ENCODE measurements at regions of chr15 and their contacts with region 1.

Region 1: GRCh38 chr15:98292442-98293240 is 332.1 kb downstream of the ARRDC4 start:
- DNase-seq: no peak
- ATAC-seq: peak; percentile 85
- H3K4me3 ChIP-seq: no peak overlapping the region
- H3K27ac ChIP-seq: no peak overlapping the region
- H3K4me1 ChIP-seq: no peaks in the 10 kb centered on the region; the same call in 1 of the 2 replicates
- H3K27me3 ChIP-seq: peaks cover 18% of the 10 kb centered on the region
- CTCF ChIP-seq: peak; percentile 93

Region 2: DNA sequence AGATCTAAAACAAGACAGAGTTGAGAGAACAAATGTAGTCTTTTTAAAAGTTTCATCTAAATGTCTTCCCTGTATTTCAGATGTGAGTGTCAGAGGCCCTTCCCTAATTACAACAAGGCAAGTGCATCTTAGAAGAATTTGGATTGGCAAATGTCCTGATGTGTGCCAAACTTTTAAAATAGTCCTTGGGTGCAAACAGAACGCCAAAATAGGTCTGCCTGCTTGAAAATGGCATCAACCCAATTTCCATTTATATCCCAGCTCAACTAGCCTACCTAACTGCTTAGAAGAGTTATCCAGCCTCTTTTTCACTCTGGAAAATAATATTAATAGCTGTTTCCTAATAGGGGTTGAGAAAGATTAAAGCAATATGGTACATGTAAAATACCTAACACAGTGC is 643.9 kb before region 1 on chr15:
- CTCF ChIA-PET with region 1: no interaction called
- POLR2A ChIA-PET with region 1: no interaction called
- in situ Hi-C with region 1: no loop called
- intact Hi-C with region 1: no loop called
- DNase-seq: no peak
- ATAC-seq: no peak
- H3K4me3 ChIP-seq: no peak overlapping the region
- H3K27ac ChIP-seq: no peak overlapping the region
- H3K4me1 ChIP-seq: no peaks in the 10 kb centered on the region
- H3K27me3 ChIP-seq: no peaks in the 10 kb centered on the region
- CTCF ChIP-seq: no peak

Region 3: DNA sequence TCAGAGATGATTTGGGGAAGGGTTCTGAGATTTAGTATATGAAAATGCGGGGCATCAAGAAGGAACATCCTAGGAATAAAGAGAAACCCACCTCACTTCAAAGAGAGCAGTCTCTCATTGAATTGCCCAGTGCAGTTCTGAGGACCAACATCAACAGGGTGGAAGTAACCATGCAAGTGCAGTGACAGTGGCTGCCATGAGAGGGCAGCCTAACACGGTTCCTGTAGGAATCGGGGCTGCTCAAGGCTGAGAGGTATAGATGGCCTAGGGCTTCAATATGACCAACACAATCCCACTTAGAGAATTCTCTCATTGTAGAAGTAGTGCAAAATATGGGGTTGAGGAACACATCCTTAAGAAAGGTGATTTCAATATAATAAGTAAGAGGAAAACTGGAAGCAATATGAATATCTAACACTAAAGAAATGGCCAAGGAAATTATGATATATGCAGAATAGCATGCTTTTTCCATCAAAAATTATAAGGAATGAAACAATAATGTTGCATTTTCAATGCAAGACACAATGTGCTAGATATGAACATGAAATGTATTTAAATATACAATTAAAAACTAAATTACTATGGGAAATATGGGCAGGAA is 383.2 kb before region 1 on chr15:
- CTCF ChIA-PET with region 1: no interaction called
- POLR2A ChIA-PET with region 1: no interaction called
- in situ Hi-C with region 1: no loop called
- intact Hi-C with region 1: loop called (anchors 2 kb)
- DNase-seq: peak; percentile 39
- ATAC-seq: peak; percentile 99
- H3K4me3 ChIP-seq: no peak overlapping the region
- H3K27ac ChIP-seq: no peak overlapping the region
- H3K4me1 ChIP-seq: no peaks in the 10 kb centered on the region
- H3K27me3 ChIP-seq: peaks cover 13% of the 10 kb centered on the region
- CTCF ChIP-seq: peak; percentile 94

Region 4: DNA sequence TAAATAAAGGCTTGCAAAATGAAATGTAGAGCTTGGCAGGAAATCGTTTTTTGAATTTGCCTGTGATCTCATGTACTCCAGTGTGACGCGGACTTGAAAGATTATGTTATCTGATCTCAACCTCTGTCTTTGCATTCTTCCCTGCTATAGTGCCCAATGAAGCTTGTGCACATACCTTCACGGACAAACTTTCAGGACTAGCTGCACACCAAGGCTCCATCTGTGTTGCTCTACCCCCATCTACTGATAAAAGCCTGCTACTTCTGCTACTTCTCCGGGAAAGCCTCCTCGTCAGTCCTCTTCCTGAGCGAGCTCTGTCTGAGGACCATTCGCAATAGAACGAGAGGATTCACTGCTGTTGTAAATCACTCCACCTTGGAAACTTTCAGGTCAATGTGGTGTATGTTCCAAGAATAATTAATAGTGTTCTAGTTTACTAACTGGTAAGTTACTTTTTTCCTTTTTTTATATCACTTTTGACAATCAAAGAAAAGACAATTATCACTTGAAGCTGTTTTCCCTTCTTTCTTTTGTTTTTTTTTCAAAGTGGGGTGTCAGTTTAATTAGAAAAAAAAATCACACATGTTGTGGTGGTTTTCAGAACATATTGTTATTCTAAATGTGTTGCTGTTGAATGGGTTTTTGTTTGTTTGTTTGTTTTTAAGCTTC is 114.6 kb before region 1 on chr15:
- CTCF ChIA-PET with region 1: interaction called, 3 read pairs
- POLR2A ChIA-PET with region 1: no interaction called
- in situ Hi-C with region 1: no loop called
- intact Hi-C with region 1: loop called (anchors 5 kb)
- DNase-seq: peak; percentile 39
- ATAC-seq: peak; percentile 98
- H3K4me3 ChIP-seq: no peak overlapping the region
- H3K27ac ChIP-seq: no peak overlapping the region
- H3K4me1 ChIP-seq: no peaks in the 10 kb centered on the region
- H3K27me3 ChIP-seq: peaks cover 11% of the 10 kb centered on the region
- CTCF ChIP-seq: peak; percentile 80

Region 5: DNA sequence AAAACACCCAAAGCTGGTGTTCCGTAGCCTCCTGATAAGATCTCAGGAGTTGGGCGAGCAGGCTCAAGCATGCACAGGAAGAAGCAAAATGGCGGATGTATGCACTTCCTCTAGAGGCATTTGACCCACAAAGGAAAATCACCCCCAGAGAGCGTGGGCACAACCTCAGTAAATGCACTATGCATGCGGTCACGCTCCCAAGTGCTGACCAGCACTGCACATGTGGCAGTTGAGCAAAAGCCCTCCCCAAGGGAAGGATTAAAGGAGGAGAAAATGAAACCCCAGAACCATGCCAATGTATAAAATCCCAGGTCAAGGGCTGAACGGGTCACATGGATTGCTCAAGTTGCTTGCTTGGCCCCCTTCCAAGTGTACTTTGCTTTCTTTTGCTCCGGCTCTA is 66.3 kb after region 1 on chr15:
- CTCF ChIA-PET with region 1: no interaction called
- POLR2A ChIA-PET with region 1: no interaction called
- in situ Hi-C with region 1: no loop called
- intact Hi-C with region 1: loop called (anchors 10 kb)
- DNase-seq: no peak
- ATAC-seq: no peak
- H3K4me3 ChIP-seq: no peak overlapping the region
- H3K27ac ChIP-seq: no peak overlapping the region
- H3K4me1 ChIP-seq: no peaks in the 10 kb centered on the region
- H3K27me3 ChIP-seq: no peaks in the 10 kb centered on the region
- CTCF ChIP-seq: no peak